Activated B cell treated with CpG ODN at 0.5 μM for 24 hours (primary cell): ENCODE measurements at regions of chr16 and their contacts with region 1.

Region 1: DNA sequence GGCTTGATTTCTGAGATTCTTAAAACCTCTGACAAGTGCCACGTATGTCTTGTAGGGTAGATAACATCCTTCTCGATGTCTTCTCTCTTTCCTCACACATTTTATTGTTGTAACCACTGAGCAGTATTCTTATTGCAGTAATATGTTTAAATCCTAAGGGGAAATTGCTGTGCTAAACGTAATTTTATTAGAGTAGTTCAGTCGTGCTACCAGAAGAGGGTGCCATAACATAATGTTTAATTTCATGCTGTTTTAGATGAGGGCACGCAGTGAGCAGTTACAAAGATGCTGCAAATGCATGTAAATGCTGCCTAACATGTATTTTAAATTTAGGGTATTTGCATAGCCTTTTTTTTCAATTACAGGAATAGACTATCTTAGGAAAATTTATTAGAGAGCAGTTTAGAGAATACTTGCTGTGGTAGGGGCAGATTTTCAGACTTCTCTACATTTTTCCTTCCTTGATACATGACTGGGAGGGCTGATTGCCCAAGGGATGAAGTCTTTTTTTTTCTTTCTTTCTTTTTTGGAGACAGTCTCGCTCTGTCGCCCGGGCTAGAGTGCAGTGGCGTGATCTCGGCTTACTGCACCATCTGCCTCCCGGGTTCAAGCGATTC is 51.7 kb downstream of the GAN start:
- DNase-seq: no peak
- ATAC-seq: peak; percentile 82
- H3K4me3 Mint-ChIP-seq: no peak overlapping the region
- H3K27ac Mint-ChIP-seq: no peak overlapping the region
- H3K4me1 Mint-ChIP-seq: no peaks in the 10 kb centered on the region
- H3K27me3 Mint-ChIP-seq: no peaks in the 10 kb centered on the region
- CTCF ChIP-seq: no peak

Region 2: DNA sequence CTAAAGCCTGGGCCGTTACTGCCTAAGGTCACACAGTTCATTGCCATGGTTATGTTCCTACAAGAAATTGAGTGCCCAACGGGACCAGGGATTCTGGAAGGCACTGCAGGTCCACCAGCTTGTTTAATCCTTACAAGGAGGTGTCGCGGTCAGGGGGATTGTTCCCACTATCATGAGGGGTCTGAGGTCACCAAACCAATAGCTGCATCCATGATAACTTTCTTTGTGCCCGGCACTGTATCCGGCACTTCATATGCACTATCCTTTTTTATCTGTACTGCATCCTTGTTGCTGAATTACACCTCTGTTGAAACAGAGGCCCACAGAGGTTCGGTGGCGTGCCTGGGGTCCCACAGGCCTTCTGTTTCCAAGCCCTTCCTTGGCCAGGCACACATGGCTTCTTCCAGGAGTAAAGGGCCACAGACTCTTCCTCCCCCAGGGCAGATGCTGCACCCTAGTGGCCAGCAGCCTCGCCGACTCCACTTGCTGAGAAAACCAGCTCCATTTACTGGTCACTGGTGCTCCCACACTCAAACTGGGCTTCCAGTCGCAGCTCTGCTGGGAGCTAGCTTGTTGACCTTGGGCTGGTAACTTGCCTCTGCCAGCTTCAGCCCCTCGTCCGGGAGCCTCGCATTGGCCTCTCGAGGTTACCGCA is 330.7 kb after region 1 on chr16:
- CTCF ChIA-PET with region 1: interaction called, 8 read pairs
- POLR2A ChIA-PET with region 1: no interaction called
- intact Hi-C with region 1: loop called (anchors 1 kb)
- DNase-seq: no peak
- ATAC-seq: no peak
- H3K4me3 Mint-ChIP-seq: no peak overlapping the region
- H3K27ac Mint-ChIP-seq: no peak overlapping the region
- H3K4me1 Mint-ChIP-seq: no peaks in the 10 kb centered on the region
- H3K27me3 Mint-ChIP-seq: no peaks in the 10 kb centered on the region
- CTCF ChIP-seq: no peak

Region 3: GRCh38 chr16:82535262-82535661 is 1168.8 kb after region 1 on chr16:
- CTCF ChIA-PET with region 1: no interaction called
- POLR2A ChIA-PET with region 1: no interaction called
- intact Hi-C with region 1: no loop called
- DNase-seq: no peak
- ATAC-seq: no peak
- H3K4me3 Mint-ChIP-seq: no peak overlapping the region
- H3K27ac Mint-ChIP-seq: no peak overlapping the region
- H3K4me1 Mint-ChIP-seq: no peaks in the 10 kb centered on the region
- H3K27me3 Mint-ChIP-seq: no peaks in the 10 kb centered on the region
- CTCF ChIP-seq: no peak